ENCODE measurements at regions of chr17 and their contacts with region 1.

Region 1: DNA sequence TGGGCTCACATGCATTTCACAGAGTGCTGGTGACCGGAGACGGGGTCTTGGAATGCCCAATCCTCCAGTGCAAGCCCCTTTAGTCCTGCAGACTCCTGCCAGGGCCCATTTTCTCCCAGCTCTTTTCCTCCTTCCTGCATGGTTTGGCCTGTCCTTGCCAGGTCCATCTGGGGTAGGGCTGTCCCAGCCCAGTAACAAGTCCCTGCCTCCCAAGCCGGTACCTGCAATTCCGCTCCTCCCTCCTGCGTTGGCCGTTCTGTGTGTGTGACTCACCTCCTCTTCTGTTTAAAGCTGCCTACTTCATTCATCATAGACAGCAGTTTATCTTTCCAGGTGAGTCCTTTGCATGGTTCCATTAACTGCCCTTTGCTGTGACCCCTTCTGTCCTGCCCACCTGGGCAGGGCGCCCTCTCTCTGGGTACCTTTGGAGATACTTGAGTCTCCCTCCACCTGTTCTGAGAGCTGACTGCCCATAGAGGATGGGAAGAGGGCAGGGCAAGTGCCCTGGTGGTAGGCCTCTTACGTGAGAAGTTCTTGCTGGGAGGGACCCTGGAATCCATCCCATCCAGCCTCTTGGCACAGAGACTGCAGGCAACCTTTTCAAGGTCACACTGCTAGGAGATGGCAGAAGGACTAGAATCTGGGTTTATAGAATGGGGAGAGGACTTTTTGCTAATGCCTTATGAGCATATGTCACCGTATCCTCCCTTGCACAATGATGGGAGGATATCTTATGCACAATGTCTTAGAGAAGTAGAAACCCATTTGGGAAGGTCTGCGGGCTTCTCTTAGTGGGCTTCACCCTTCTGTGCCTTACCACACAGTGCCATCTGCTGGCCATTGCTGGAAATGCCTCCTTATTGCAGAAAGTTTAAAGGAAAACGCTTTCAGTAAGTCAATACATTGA is 29.7 kb upstream of the LGALS9 start:
- DNase-seq: peak; percentile 94
- H3K4me3 ChIP-seq: no peak overlapping the region
- H3K27ac ChIP-seq: no peak overlapping the region
- H3K4me1 ChIP-seq: peaks cover 8% of the 10 kb centered on the region
- H3K27me3 ChIP-seq: no peaks in the 10 kb centered on the region
- CTCF ChIP-seq: peak; percentile 93 to 95 (median 93)
- POLR2A ChIP-seq: no peak

Region 2: DNA sequence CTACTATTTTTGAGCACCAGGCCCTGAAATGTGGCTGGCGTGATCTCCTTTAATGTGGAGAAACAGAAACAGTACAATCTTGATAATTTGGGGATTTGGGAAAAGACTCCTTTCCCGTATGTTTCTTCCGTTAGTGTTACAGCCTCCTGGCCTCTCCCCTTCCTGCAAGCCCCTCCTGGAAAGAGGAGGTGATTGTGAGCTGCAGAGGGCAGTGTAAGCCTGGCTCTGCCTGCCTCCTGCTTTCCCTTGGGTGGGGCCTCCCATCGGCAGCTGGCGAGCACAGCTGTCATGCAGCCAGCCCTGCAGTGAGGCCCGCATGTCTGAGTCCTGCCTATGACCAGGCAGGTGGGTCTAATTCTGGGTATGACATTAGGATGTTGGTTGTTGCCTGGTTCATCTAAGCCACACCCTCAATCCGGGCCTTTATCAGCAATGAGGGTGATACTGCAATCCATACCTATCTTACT is 356.1 kb before region 1 on chr17:
- intact Hi-C with region 1: loop called (anchors 10 kb)
- DNase-seq: peak; percentile 82
- H3K4me3 ChIP-seq: no peak overlapping the region
- H3K27ac ChIP-seq: peak overlapping the region in 1 of 2 donors; percentile 75
- H3K4me1 ChIP-seq: peaks cover 22% of the 10 kb centered on the region
- H3K27me3 ChIP-seq: no peaks in the 10 kb centered on the region
- CTCF ChIP-seq: peak in 2 of 3 experiments; percentile 45 to 58
- POLR2A ChIP-seq: no peak

Region 3: GRCh38 chr17:27353461-27354050 is 247.8 kb before region 1 on chr17:
- intact Hi-C with region 1: loop called (anchors 10 kb)
- DNase-seq: peak; percentile 88
- H3K4me3 ChIP-seq: peak overlapping the region; percentile 65 to 69
- H3K27ac ChIP-seq: peak overlapping the region; percentile 73 to 93
- H3K4me1 ChIP-seq: peaks cover 6% of the 10 kb centered on the region
- H3K27me3 ChIP-seq: no peaks in the 10 kb centered on the region
- CTCF ChIP-seq: peak; percentile 97 to 98 (median 97)
- POLR2A ChIP-seq: no peak

Region 4: DNA sequence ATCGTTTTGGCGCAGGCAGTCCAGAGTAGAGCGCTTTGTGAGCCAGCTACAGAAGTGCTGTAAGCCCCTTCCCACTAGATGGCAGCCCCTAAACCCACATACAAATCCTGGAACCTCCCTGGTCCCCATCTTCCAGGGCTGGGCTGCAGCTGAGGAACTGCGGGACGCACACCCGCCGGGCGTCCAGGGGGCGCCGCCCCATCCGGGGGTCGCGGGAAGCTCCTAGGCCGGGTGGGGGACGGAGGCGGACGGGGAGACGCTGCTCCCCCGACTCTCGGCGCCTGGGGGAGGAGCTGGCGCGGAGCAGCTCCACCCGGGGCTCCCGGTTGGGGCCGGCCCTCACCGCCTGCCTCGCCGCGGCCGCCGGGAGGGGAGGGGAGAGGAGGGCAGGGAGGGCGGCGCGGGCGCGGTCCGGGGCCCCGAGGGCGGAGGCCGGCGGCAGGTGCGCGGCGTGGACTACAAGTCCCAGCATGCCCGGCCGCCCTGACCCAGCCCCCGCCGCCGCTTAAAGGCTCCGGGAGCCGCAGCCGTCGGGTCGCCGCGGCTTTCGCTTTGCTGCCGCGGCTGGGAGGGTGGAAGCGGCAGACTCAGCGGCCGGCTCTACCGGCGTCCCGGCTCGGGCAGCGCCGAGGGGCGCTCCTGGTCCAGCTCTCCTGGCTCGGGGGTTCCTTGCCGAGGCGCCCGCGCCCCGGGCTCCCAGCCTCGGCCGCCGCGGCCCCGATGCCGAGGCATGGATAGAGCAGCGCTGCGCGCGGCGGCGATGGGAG is 145.2 kb before region 1 on chr17 and contains the start of gene KSR1:
- intact Hi-C with region 1: loop called (anchors 10 kb)
- DNase-seq: peak; percentile 87
- H3K4me3 ChIP-seq: peak within 1 kb of the TSS; percentile 86 to 92
- H3K27ac ChIP-seq: peak within 1 kb of the TSS; percentile 79 to 87
- H3K4me1 ChIP-seq: peaks cover 13% of the 10 kb centered on the region
- H3K27me3 ChIP-seq: no peaks in the 10 kb centered on the region
- CTCF ChIP-seq: peak in 2 of 3 experiments; percentile 13 to 20
- POLR2A ChIP-seq: no peak
- total RNA-seq, gene KSR1: 44.8 to 80.7 TPM

Region 5: GRCh38 chr17:27532269-27533263 is 68.8 kb before region 1 on chr17:
- intact Hi-C with region 1: loop called (anchors 10 kb)
- DNase-seq: peak; percentile 22
- H3K4me3 ChIP-seq: no peak overlapping the region
- H3K27ac ChIP-seq: no peak overlapping the region
- H3K4me1 ChIP-seq: no peaks in the 10 kb centered on the region
- H3K27me3 ChIP-seq: no peaks in the 10 kb centered on the region
- CTCF ChIP-seq: no peak
- POLR2A ChIP-seq: no peak

Region 6: DNA sequence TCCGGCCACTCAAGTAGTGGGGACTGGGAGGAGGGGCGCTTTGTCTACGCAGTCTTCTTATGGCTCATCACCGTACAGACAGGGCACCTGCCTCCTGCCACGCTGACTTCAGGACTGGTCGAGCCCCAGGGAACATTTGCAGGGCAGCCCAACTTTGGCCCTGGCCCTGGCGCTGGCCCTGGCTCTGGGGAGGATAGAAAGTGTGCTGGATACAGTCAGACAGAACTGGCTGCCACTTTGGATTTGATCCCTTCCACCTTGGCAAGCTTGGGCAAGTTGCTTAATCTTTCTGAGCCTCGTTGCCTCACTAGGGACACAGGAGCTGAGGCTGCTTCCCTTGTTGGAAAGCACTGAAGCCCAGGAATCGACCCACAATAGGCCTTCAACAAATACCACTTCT is 43.3 kb after region 1 on chr17:
- intact Hi-C with region 1: no loop called
- DNase-seq: no peak
- H3K4me3 ChIP-seq: no peak overlapping the region
- H3K27ac ChIP-seq: no peak overlapping the region
- H3K4me1 ChIP-seq: no peaks in the 10 kb centered on the region
- H3K27me3 ChIP-seq: no peaks in the 10 kb centered on the region
- CTCF ChIP-seq: no peak
- POLR2A ChIP-seq: no peak

Measured in testis (tissue), 5 donors.